Ascending aorta (tissue), 2 donors: ENCODE measurements at regions of chr1 and their contacts with region 1.

Region 1: DNA sequence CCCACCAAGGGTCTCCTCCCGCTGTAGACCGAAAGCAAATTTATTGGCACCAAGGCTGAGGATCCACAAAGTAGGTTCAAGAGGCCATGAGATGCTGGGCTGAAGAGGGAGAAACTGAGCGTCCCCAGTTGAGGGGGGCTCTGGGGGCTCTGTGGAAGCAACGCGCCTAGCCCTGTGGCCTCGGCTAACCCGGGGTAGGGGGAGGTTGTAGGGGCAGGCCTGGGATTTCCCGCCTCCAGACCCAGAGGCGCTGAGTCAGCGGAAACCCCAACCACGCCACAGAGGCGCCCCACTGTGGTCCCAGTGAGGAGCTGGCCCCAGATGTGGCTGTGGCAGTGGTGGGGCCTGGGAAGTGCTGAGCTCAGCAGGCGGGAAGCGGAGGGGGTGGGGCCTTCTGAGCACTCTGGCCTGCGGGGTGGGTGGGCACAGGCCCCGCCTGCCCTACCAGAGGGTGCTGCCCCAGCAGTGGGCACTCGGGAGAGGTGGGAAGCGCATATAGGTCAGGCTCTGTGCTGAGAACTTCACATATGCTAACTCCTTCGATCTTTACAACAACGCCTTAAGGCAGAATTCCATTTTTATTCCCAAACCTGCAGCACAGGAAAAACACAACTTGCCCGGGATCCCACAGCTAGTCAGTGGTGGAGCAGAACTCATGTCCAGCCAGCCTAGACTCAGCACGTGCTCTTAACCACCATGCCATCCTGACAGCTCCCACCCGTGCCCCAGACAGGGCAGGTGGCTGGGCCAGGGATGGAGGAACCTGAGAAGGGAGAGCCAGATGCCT is 1.5 kb upstream of the COL16A1 start:
- DNase-seq: peak in 1 of 2 donors; percentile 84
- H3K4me3 ChIP-seq: peak overlapping the region; percentile 47 to 65
- H3K27ac ChIP-seq: peak overlapping the region; percentile 90 to 94
- H3K4me1 ChIP-seq: peaks cover 8 to 52% of the 10 kb centered on the region in 2 donors
- H3K27me3 ChIP-seq: no peaks in the 10 kb centered on the region
- CTCF ChIP-seq: peak; percentile 35 to 63 (median 46)

Region 2: GRCh38 chr1:31587720-31588394 is 117.4 kb before region 1 on chr1:
- intact Hi-C with region 1: loop called (anchors 1 kb)
- DNase-seq: peak; percentile 70 to 94
- H3K4me3 ChIP-seq: peak overlapping the region; percentile 46 to 56
- H3K27ac ChIP-seq: peak overlapping the region; percentile 93 to 97
- H3K4me1 ChIP-seq: peaks cover 45 to 77% of the 10 kb centered on the region in 2 donors
- H3K27me3 ChIP-seq: no peaks in the 10 kb centered on the region
- CTCF ChIP-seq: peak; percentile 28 to 69 (median 65)

Region 3: DNA sequence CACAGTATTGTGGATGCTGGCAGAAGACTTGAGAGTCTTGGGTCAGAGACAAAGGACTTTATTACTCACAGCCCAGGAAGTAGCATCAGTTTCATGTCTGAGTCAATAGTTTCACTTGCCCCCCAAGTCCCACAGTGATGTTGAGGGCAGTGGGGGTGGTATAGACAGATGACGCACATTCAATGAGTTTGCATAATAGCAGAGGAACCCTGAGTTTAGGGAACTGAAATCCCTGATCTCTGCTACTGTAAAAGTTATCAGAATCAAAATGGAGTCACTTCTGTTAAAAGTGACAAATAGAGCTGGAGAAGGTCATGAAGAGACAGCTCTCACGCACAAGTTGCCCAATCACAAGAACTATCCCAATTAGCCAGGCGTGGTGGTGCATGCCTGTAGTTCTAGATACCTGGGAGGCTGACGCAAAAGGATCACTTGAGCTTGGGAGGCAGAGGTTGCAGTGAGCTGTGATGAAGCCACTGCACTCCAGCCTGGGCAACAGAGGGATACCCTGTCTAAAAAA is 99.3 kb before region 1 on chr1:
- intact Hi-C with region 1: no loop called
- DNase-seq: no peak
- H3K4me3 ChIP-seq: no peak overlapping the region
- H3K27ac ChIP-seq: no peak overlapping the region
- H3K4me1 ChIP-seq: no peaks in the 10 kb centered on the region
- H3K27me3 ChIP-seq: no peaks in the 10 kb centered on the region
- CTCF ChIP-seq: no peak

Region 4: DNA sequence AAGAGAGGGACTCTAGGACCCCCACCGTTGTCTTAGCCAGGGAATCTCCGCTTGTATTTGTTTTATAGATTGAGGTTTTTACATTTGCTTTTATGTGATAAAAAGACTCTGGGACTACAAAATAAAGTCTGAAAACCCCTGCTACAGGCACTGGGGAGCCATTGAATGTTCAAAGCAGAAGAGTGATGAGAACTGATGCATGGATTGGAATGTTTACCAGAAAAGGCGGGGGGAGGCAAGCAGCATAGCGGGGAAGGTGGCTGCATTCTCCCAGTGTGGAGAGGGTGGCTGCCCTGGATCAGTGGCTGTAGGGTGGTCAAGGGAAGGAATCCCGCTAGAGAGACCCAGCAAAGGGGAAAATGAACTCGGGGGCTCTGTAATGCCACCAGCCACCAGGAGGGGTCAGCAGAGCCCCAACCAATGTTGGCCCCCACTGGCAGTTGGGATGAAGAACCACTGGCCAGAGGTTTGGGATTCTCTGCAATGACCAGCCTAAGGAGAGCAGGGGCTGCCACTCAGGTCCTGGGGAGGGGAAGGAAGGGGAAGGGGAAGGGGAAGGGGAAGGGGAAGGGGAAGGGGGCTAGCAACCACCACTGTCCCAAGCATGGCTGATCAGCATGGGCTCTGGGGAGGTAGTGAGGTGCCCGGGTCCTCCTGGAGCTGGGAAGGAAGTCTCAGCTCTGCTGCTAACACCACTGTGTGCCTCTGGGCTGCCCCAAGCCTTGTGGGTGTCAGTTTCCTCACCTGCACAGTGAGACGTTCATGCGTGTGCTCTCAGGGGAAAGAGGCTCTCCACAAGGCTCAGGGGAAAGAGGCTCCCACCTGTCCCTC is 41.4 kb before region 1 on chr1:
- intact Hi-C with region 1: loop called (anchors 1 kb)
- DNase-seq: peak in 1 of 2 donors; percentile 81
- H3K4me3 ChIP-seq: no peak overlapping the region
- H3K27ac ChIP-seq: no peak overlapping the region
- H3K4me1 ChIP-seq: peaks cover 0 to 3% of the 10 kb centered on the region in 2 donors
- H3K27me3 ChIP-seq: no peaks in the 10 kb centered on the region
- CTCF ChIP-seq: peak; percentile 89 to 98 (median 90)

Region 5: DNA sequence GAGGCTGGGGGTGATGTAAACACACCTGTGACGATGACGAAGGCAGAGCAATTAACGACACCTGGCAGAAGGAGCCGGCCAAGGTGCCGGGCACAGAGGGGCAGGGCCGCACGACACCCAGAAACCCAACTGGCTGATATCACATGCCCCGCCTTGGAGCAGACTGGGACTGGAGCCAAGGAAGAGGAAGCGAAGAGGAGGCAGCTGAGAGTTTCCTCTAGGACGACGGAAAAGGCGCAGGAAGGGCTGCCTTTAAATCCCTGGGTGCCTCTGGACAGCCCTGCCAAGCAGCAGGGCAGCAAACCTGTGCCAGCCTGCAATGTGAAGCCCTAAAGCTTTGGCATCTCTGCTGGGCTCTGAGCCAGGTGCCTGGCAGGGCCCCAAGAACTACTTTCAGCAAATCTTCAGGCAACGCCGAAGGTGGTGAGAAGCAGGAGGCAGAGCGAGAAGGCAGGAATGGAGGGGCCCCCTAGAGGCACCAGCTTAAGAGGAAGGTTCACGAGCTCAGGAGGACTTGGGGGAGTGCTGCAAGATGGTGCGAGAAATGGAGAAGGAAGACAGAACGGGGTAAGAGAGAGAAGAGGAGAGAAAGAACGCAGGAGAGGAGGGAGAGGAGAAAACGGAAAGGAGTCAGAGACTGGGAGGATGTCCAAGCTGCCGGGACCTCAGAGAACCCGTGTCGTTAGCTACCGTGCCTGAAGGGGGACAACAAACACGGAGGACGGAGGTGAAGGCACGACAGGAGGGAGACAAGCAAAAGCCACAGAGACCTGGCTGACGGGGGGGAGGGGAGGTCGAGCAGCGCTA is 35.3 kb before region 1 on chr1:
- intact Hi-C with region 1: loop called (anchors 1 kb)
- DNase-seq: peak; percentile 41 to 91
- H3K4me3 ChIP-seq: peak overlapping the region; percentile 46 to 55
- H3K27ac ChIP-seq: peak overlapping the region; percentile 81 to 83
- H3K4me1 ChIP-seq: peaks cover 4 to 38% of the 10 kb centered on the region in 2 donors
- H3K27me3 ChIP-seq: no peaks in the 10 kb centered on the region
- CTCF ChIP-seq: peak; percentile 23 to 26 (median 24)